GM12878 (cell line): ENCODE measurements at regions of chr1 and their contacts with region 1.

Region 1: DNA sequence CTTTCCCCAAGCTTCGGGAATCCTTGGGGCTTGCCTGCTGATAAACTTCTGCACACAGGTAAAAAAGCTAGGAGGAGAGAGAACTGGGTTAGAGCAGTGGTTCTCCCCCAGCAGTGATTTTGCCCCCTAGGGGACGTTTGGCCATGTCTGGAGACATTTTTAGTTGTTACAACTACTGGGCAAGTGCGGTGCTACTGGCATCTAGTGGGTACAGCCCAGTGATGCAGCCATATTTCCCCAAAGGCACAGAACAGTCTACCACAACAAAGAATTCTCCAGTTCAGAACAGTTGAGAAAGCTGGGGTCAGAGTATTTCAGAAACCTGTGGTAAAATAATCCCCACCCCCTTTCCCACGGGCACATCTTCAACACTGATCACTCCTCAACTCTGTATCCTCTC is 41.3 kb downstream of the LRRC71 start:
- DNase-seq: no peak
- ATAC-seq: peak; percentile 86
- H3K4me3 ChIP-seq: no peak overlapping the region
- H3K27ac ChIP-seq: no peak overlapping the region
- H3K4me1 ChIP-seq: peaks cover 3% of the 10 kb centered on the region
- H3K27me3 ChIP-seq: no peaks in the 10 kb centered on the region; a peak in 1 of 4 replicates
- CTCF ChIP-seq: peak; percentile 47 to 59 (median 53)
- EP300 ChIP-seq: no peak
- POLR2A ChIP-seq: no peak
- RAD21 ChIP-seq: peak; percentile 36; the same call in 1 of the 2 replicates

Region 2: DNA sequence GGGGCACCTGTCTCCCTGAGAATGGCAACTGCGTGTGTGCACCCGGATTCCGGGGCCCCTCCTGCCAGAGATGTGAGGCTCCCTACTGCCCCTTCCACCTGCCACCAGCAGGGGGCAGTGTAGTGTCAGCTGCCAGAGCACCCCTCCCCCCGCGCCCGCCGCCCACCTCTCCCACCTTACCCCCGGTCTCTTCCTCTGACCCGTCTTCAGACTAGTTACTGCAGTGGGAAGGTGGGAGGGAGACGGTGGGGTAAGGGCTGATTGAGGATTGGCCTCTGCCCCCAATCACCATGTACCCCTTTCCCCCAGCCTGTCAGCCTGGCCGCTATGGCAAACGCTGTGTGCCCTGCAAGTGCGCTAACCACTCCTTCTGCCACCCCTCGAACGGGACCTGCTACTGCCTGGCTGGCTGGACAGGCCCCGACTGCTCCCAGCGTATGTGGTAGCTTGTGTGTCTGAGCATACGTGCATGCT is 51.4 kb before region 1 on chr1:
- CTCF ChIA-PET with region 1: interaction called, 3 read pairs
- POLR2A ChIA-PET with region 1: no interaction called
- RAD21 ChIA-PET with region 1: no interaction called
- SMC1A ChIA-PET with region 1: no interaction called
- in situ Hi-C with region 1: no loop called
- intact Hi-C with region 1: loop called (anchors 5 kb)
- DNase-seq: no peak
- ATAC-seq: peak; percentile 77
- H3K4me3 ChIP-seq: no peak overlapping the region
- H3K27ac ChIP-seq: no peak overlapping the region
- H3K4me1 ChIP-seq: no peaks in the 10 kb centered on the region
- H3K27me3 ChIP-seq: peaks cover 2% of the 10 kb centered on the region in 2 experiments; a peak in 3 of 4 replicates
- CTCF ChIP-seq: peak; percentile 69 to 97 (median 70)
- EP300 ChIP-seq: no peak
- POLR2A ChIP-seq: no peak
- RAD21 ChIP-seq: peak; percentile 43